Left ventricle myocardium superior (tissue), 1 donor: ENCODE measurements at regions of chr17 and their contacts with region 1.

Region 1: DNA sequence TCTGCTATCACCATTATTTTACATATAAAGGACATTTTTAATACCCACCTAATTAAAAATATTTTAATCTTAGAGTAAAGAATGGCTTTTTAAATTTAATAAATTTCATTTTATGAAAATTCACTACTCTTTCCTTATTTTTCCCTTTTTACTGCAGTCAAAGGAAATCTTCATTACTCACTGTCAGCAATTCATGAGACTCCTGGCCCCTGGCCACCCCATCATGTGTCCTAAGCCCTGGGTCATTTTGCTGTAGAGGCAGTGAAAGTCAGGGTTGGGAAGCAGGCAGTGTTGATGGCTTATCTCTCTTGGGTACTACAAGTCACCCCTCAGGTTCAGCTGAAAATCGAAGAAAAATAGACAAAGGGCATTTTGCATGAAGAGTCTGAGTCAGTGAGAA is 468.6 kb upstream of the CCL2 start:
- DNase-seq: peak; percentile 47
- ATAC-seq: no peak

Region 2: GRCh38 chr17:34146440-34147043 is 360.1 kb after region 1 on chr17:
- intact Hi-C with region 1: loop called (anchors 10 kb)
- DNase-seq: peak; percentile 69
- ATAC-seq: peak; percentile 72